CD8-positive, alpha-beta T cell (primary cell): ENCODE measurements at regions of chr12 and their contacts with region 1.

Region 1: GRCh38 chr12:48890657-48891418 is 25.2 kb upstream of the RND1 start:
- DNase-seq: peak; percentile 55 to 85 (median 73)
- ATAC-seq: peak; percentile 99
- H3K4me3 ChIP-seq: peak overlapping the region in 1 of 2 experiments; percentile 35
- H3K4me3 Mint-ChIP-seq: no peak overlapping the region
- H3K27ac ChIP-seq: no peak overlapping the region
- H3K27ac Mint-ChIP-seq: no peak overlapping the region
- H3K4me1 ChIP-seq: peaks cover 7% of the 10 kb centered on the region
- H3K4me1 Mint-ChIP-seq: peaks cover 3% of the 10 kb centered on the region
- H3K27me3 ChIP-seq: peaks cover 5 to 13% of the 10 kb centered on the region in 2 experiments
- H3K27me3 Mint-ChIP-seq: peaks cover 19% of the 10 kb centered on the region
- CTCF ChIP-seq: peak; percentile 83

Region 2: DNA sequence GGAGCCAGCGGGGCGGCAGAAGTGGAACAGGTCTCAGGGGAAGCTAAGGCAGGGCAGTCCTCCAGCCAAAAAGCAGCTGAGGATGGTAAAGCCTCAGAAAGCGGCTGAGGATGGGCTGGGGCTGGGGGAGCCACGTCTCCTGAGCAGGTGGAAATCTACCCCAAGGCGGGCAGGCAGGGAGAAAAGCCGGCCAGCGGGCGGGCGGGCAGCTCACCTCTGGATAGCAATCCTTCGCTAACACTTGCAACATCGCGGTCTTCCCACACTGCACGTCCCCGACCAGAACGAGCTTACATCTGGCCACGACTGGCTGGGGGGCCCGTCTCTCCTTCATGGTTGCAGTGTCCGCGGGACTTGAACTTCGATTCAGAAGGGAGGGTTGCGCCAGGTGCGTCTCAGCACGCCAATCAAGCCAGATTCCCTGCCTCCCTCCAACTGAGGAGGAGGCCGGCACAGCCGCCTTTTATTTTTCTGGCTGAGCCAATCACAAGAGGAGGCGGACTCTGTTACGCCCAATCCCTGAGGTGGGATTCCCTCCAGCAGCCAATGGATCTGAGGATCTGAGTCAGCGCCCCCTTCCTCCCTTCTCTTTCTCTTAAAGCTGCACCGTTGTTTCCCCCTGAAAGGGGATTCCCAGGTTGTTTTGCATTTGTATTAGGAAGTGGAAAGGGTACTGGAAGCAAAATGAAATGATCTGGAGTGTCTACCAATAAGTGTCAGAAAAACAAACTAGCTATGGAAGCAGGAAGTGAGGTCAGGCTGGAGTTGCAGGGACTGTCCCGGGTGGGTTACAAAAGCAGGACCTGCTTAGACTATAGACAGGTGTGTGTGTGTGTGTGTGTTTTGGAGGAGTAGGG is 25.2 kb before region 1 on chr12 and contains the start of gene RND1:
- CTCF ChIA-PET with region 1: interaction called, 270 read pairs
- POLR2A ChIA-PET with region 1: no interaction called
- intact Hi-C with region 1: no loop called
- DNase-seq: peak; percentile 58 to 96 (median 85)
- ATAC-seq: peak; percentile 95
- H3K4me3 ChIP-seq: peak within 1 kb of the TSS; percentile 56 to 74
- H3K4me3 Mint-ChIP-seq: peak within 1 kb of the TSS; percentile 93
- H3K27ac ChIP-seq: peak within 1 kb of the TSS; percentile 19 to 28
- H3K27ac Mint-ChIP-seq: peak within 1 kb of the TSS; percentile 84
- H3K4me1 ChIP-seq: peaks cover 15% of the 10 kb centered on the region
- H3K4me1 Mint-ChIP-seq: peaks cover 27% of the 10 kb centered on the region
- H3K27me3 ChIP-seq: peaks cover 7 to 16% of the 10 kb centered on the region in 2 experiments
- H3K27me3 Mint-ChIP-seq: peaks cover 30% of the 10 kb centered on the region
- CTCF ChIP-seq: no peak
- total RNA-seq, gene RND1: 11.9 to 12.9 TPM

Region 3: GRCh38 chr12:48903982-48904411 is 13.2 kb after region 1 on chr12:
- CTCF ChIA-PET with region 1: interaction called, 65 read pairs
- POLR2A ChIA-PET with region 1: interaction called, 3 read pairs
- intact Hi-C with region 1: no loop called
- DNase-seq: peak; percentile 68 to 93 (median 87)
- ATAC-seq: peak; percentile 99
- H3K4me3 ChIP-seq: peak overlapping the region; percentile 13 to 27
- H3K4me3 Mint-ChIP-seq: peak overlapping the region; percentile 79
- H3K27ac ChIP-seq: no peak overlapping the region
- H3K27ac Mint-ChIP-seq: no peak overlapping the region
- H3K4me1 ChIP-seq: peaks cover 4% of the 10 kb centered on the region
- H3K4me1 Mint-ChIP-seq: peaks cover 11% of the 10 kb centered on the region
- H3K27me3 ChIP-seq: no peaks in the 10 kb centered on the region
- H3K27me3 Mint-ChIP-seq: no peaks in the 10 kb centered on the region
- CTCF ChIP-seq: peak; percentile 79

Region 4: GRCh38 chr12:48924617-48925303 is 33.9 kb after region 1 on chr12:
- CTCF ChIA-PET with region 1: interaction called, 17 read pairs
- POLR2A ChIA-PET with region 1: interaction called, 3 read pairs
- intact Hi-C with region 1: no loop called
- DNase-seq: peak; percentile 65 to 90 (median 83)
- ATAC-seq: peak; percentile 69
- H3K4me3 ChIP-seq: peak overlapping the region; percentile 96 to 99
- H3K4me3 Mint-ChIP-seq: peak overlapping the region; percentile 97
- H3K27ac ChIP-seq: peak overlapping the region; percentile 94
- H3K27ac Mint-ChIP-seq: peak overlapping the region; percentile 97
- H3K4me1 ChIP-seq: peaks cover 24% of the 10 kb centered on the region
- H3K4me1 Mint-ChIP-seq: peaks cover 46% of the 10 kb centered on the region
- H3K27me3 ChIP-seq: no peaks in the 10 kb centered on the region
- H3K27me3 Mint-ChIP-seq: no peaks in the 10 kb centered on the region
- CTCF ChIP-seq: peak; percentile 78